ENCODE measurements at regions of chr11 and their contacts with region 1.

Region 1: GRCh38 chr11:64152841-64153691 is 12.8 kb downstream of the MACROD1 start:
- DNase-seq: peak; percentile 72 to 74 (median 72)
- ATAC-seq: peak; percentile 83 to 89 (median 85)
- H3K4me3 ChIP-seq: no peak overlapping the region
- H3K27ac ChIP-seq: no peak overlapping the region
- H3K4me1 ChIP-seq: peaks cover 0 to 13% (median 6%) of the 10 kb centered on the region in 4 donors
- H3K27me3 ChIP-seq: no peaks in the 10 kb centered on the region
- CTCF ChIP-seq: peak; percentile 95 to 100 (median 100)
- POLR2A ChIP-seq: no peak

Region 2: DNA sequence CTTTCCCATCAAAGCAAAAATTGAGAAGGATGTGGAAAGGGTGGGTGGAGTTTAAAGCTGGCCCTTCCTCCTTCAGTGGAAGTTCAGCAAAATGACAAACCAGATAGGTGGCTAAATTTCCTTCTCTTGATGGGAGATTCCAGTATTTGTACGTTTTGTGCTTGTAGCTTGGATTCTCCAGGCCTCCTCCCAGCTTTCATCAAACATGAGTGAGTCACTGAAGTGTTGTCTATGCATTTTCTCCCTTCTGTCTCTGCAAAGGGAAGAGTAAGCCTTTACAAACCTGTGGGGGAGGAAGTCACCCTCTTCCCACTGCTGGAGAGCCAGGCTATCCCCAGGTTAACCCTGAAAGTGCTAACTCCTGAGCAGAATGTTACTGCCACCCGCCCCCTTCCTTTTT is 307.8 kb before region 1 on chr11:
- intact Hi-C with region 1: no loop called
- DNase-seq: no peak
- ATAC-seq: peak in 2 of 4 donors; percentile 21 to 63
- H3K4me3 ChIP-seq: no peak overlapping the region
- H3K27ac ChIP-seq: no peak overlapping the region
- H3K4me1 ChIP-seq: peaks cover 0 to 40% (median 0%) of the 10 kb centered on the region in 4 donors
- H3K27me3 ChIP-seq: no peaks in the 10 kb centered on the region
- CTCF ChIP-seq: no peak
- POLR2A ChIP-seq: no peak

Region 3: DNA sequence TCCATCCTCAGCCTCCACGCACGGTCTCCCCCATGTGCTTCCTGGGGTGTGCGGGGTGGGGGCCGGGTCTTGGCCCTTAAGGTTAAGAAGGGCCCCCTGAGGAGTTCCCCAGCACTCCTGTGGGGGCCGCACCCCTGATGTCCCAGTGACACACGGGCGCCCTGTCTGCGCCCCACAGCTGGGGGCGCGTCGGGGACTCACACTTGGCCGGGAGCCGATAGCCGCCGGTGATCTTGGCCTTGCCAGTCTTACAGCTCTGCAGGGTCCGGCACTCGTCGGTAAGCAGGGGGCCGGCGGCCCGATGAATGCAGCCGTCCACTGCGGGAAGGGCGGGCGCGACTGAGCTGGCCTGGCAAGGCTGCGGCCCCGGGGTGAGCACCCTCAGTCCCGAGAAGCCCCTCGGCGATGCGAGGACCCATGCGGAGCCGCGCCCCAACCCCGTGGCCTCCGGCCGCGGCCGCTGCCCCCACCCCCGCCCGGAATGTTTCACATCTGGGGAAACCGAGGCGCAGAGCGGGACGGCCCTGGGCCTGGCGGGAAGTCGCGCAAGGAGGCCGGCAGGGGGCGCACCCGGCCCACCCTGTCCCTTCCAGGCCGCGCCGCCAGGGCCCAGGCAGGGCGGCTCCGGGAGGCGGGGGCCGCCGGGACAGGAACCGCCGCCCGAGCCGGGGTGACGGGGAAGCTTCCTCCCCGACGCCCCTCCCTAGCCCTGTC is 152.9 kb before region 1 on chr11:
- intact Hi-C with region 1: loop called (anchors 2 to 5 kb)
- DNase-seq: peak; percentile 68 to 74 (median 71)
- ATAC-seq: peak; percentile 72 to 89 (median 77)
- H3K4me3 ChIP-seq: peak overlapping the region in 1 of 3 donors; percentile 32
- H3K27ac ChIP-seq: no peak overlapping the region
- H3K4me1 ChIP-seq: peaks cover 0 to 12% (median 0%) of the 10 kb centered on the region in 4 donors
- H3K27me3 ChIP-seq: no peaks in the 10 kb centered on the region
- CTCF ChIP-seq: peak; percentile 66 to 84 (median 72)
- POLR2A ChIP-seq: no peak

Region 4: GRCh38 chr11:64058494-64058893 is 94.6 kb before region 1 on chr11:
- intact Hi-C with region 1: no loop called
- DNase-seq: no peak
- ATAC-seq: no peak
- H3K4me3 ChIP-seq: no peak overlapping the region
- H3K27ac ChIP-seq: no peak overlapping the region
- H3K4me1 ChIP-seq: peaks cover 0 to 6% (median 0%) of the 10 kb centered on the region in 4 donors
- H3K27me3 ChIP-seq: no peaks in the 10 kb centered on the region
- CTCF ChIP-seq: no peak
- POLR2A ChIP-seq: no peak

Region 5: DNA sequence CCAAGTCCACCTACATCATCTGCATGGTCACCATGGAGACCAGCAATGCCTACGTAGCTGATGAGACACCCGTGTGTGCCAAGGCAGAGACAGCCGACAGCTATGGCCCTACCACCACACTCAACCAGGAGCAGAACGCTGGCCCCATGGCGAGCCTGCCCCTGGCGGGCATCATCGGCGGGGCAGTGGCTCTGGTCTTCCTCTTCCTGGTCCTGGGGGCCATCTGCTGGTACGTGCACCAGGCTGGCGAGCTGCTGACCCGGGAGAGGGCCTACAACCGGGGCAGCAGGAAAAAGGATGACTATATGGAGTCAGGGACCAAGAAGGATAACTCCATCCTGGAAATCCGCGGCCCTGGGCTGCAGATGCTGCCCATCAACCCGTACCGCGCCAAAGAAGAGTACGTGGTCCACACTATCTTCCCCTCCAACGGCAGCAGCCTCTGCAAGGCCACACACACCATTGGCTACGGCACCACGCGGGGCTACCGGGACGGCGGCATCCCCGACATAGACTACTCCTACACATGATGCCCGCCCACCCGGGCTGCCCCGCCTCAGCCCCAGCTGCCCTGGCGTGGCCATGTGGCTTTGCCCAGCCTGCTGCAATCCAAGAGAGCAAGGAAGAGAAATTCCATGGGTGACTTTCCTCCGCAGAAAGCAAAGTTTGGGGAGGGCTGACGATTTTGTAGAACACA is 35.2 kb before region 1 on chr11:
- intact Hi-C with region 1: no loop called
- DNase-seq: no peak
- ATAC-seq: no peak
- H3K4me3 ChIP-seq: no peak overlapping the region
- H3K27ac ChIP-seq: no peak overlapping the region
- H3K4me1 ChIP-seq: peaks cover 0 to 3% (median 0%) of the 10 kb centered on the region in 4 donors
- H3K27me3 ChIP-seq: no peaks in the 10 kb centered on the region
- CTCF ChIP-seq: no peak
- POLR2A ChIP-seq: no peak

Region 6: DNA sequence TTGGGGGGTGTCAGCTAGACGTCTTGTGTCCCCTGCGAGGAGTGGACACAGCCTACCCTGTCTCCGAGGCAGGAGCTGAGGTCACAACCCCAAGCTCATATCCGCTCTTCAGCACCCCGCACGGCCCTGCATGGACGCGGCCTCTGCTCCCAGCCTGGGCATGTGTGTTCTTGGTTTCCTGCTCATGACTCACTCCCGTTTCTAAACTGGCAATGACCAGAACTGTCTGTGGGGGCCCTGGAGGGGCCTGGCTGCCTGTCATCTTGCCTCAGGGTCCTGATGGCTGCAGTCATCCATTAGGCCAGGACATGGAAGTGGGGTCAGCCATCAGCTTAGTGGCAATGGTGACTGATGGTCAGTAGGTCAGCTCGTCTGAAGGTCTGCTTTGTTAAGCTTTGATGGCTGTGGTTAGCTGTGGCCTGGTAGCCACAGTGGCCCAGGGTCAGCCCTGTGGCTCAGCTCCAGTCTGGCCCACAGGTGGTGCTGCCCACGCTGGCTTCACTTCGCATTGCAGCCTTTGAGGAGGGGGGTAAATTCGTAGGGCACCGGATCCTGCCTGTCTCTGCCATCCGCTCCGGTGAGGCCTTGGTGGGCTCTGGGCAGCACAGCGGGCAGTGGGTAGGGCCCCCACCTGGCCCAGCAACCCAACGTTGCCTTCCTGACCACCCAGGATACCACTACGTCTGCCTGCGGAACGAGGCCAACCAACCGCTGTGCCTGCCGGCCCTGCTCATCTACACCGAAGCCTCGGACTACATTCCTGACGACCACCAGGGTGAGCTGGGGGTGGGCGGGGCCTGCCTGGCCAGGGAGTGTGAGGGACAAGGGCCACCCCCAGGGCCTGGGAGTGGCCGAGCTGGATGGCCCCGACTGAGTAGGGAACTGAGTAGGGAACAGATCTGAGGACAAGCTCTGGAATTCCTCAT is 110.2 kb after region 1 on chr11:
- intact Hi-C with region 1: no loop called
- DNase-seq: peak in 1 of 3 donors; percentile 32
- ATAC-seq: peak in 2 of 4 donors; percentile 19 to 40
- H3K4me3 ChIP-seq: no peak overlapping the region
- H3K27ac ChIP-seq: no peak overlapping the region
- H3K4me1 ChIP-seq: peaks cover 0 to 4% (median 3%) of the 10 kb centered on the region in 4 donors
- H3K27me3 ChIP-seq: no peaks in the 10 kb centered on the region
- CTCF ChIP-seq: no peak
- POLR2A ChIP-seq: no peak